ENCODE measurements at regions of chr16 and their contacts with region 1.

Region 1: GRCh38 chr16:64455254-64455653 is 666.6 kb downstream of the CDH11 start:
- DNase-seq: peak; percentile 38
- H3K4me3 ChIP-seq: no peak overlapping the region
- H3K27ac ChIP-seq: no peak overlapping the region
- H3K4me1 ChIP-seq: no peaks in the 10 kb centered on the region
- H3K27me3 ChIP-seq: no peaks in the 10 kb centered on the region
- CTCF ChIP-seq: no peak
- POLR2A ChIP-seq: no peak

Region 2: DNA sequence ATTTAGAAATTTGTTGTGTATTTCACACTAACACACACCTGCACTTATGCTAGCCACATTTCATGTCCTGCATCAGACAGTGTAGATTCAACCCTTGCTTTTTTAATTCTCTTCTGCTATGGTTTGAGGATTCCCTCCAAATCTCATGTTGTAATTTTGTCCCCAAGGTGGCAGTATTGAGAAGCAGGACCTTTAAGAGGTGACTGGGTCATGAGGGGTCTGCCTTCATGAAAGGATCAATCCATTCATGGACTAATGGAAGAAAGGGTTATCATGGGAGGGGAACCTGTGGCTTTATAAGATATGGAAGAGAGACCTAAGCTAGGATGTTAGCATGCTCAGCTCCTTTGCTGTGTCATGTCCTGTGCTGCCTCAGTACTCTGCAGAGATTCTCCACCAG is 365.6 kb before region 1 on chr16:
- CTCF ChIA-PET with region 1: interaction called, 3 read pairs
- POLR2A ChIA-PET with region 1: no interaction called
- dilution Hi-C with region 1: no loop called
- intact Hi-C with region 1: loop called (anchors 1 kb)
- DNase-seq: peak; percentile 55
- H3K4me3 ChIP-seq: no peak overlapping the region
- H3K27ac ChIP-seq: no peak overlapping the region
- H3K4me1 ChIP-seq: no peaks in the 10 kb centered on the region
- H3K27me3 ChIP-seq: no peaks in the 10 kb centered on the region
- CTCF ChIP-seq: peak; percentile 34 to 40
- POLR2A ChIP-seq: no peak

Measured in endothelial cell of umbilical vein (primary cell).